Activated CD4-positive, alpha-beta memory T cell treated with anti-CD3 and anti-CD28 coated beads for 36 hours (primary cell): ENCODE measurements at regions of chr11 and their contacts with region 1.

Region 1: GRCh38 chr11:125887373-125888324 is at the start of gene HYLS1:
- DNase-seq: peak; percentile 99
- H3K4me3 Mint-ChIP-seq: peak within 1 kb of the TSS; percentile 74
- H3K27ac Mint-ChIP-seq: peak within 1 kb of the TSS; percentile 93
- H3K4me1 Mint-ChIP-seq: peaks cover 31% of the 10 kb centered on the region
- H3K27me3 Mint-ChIP-seq: peaks cover 6% of the 10 kb centered on the region
- total RNA-seq, gene HYLS1: 8.2 to 8.3 TPM

Region 2: GRCh38 chr11:125514336-125515101 is 373.1 kb before region 1 on chr11:
- CTCF ChIA-PET with region 1: no interaction called
- POLR2A ChIA-PET with region 1: no interaction called
- intact Hi-C with region 1: loop called (anchors 5 kb)
- DNase-seq: peak; percentile 79
- H3K4me3 Mint-ChIP-seq: no peak overlapping the region
- H3K27ac Mint-ChIP-seq: peak overlapping the region; percentile 82
- H3K4me1 Mint-ChIP-seq: peaks cover 25% of the 10 kb centered on the region
- H3K27me3 Mint-ChIP-seq: no peaks in the 10 kb centered on the region

Region 3: GRCh38 chr11:125902927-125903710 is 15.5 kb after region 1 on chr11 and contains the start of gene PUS3:
- CTCF ChIA-PET with region 1: interaction called, 16 read pairs
- POLR2A ChIA-PET with region 1: interaction called, 24 read pairs
- intact Hi-C with region 1: loop called (anchors 1 kb)
- DNase-seq: peak; percentile 93
- H3K4me3 Mint-ChIP-seq: peak within 1 kb of the TSS; percentile 93
- H3K27ac Mint-ChIP-seq: peak within 1 kb of the TSS; percentile 91
- H3K4me1 Mint-ChIP-seq: peaks cover 32% of the 10 kb centered on the region
- H3K27me3 Mint-ChIP-seq: peaks cover 21% of the 10 kb centered on the region
- total RNA-seq, gene PUS3: 20.1 to 22.9 TPM